BJ (cell line): ENCODE measurements at regions of chr1 and their contacts with region 1.

Region 1: GRCh38 chr1:202192770-202193613 is 607 bp upstream of the LGR6 start:
- DNase-seq: no peak
- H3K4me3 ChIP-seq: no peak overlapping the region
- H3K27me3 ChIP-seq: peaks cover 36% of the 10 kb centered on the region
- CTCF ChIP-seq: peak; percentile 91

Region 2: GRCh38 chr1:201990427-201990826 is 202.6 kb before region 1 on chr1:
- CTCF ChIA-PET with region 1: no interaction called
- POLR2A ChIA-PET with region 1: no interaction called
- DNase-seq: no peak
- H3K4me3 ChIP-seq: no peak overlapping the region
- H3K27me3 ChIP-seq: no peaks in the 10 kb centered on the region
- CTCF ChIP-seq: no peak

Region 3: GRCh38 chr1:202085682-202086404 is 107.1 kb before region 1 on chr1:
- CTCF ChIA-PET with region 1: no interaction called
- POLR2A ChIA-PET with region 1: no interaction called
- DNase-seq: no peak
- H3K4me3 ChIP-seq: no peak overlapping the region
- H3K27me3 ChIP-seq: peaks cover under 1% of the 10 kb centered on the region
- CTCF ChIP-seq: no peak

Region 4: GRCh38 chr1:202176949-202177927 is 15.8 kb before region 1 on chr1:
- CTCF ChIA-PET with region 1: interaction called, 23 read pairs
- POLR2A ChIA-PET with region 1: no interaction called
- DNase-seq: no peak
- H3K4me3 ChIP-seq: no peak overlapping the region
- H3K27me3 ChIP-seq: peaks cover 20% of the 10 kb centered on the region
- CTCF ChIP-seq: no peak

Region 5: GRCh38 chr1:202274611-202275010 is 81.6 kb after region 1 on chr1:
- CTCF ChIA-PET with region 1: interaction called, 19 read pairs
- POLR2A ChIA-PET with region 1: no interaction called
- DNase-seq: no peak
- H3K4me3 ChIP-seq: no peak overlapping the region
- H3K27me3 ChIP-seq: peaks cover 52% of the 10 kb centered on the region
- CTCF ChIP-seq: peak; percentile 51

Region 6: GRCh38 chr1:202291961-202292712 is 99.1 kb after region 1 on chr1:
- CTCF ChIA-PET with region 1: interaction called, 14 read pairs
- POLR2A ChIA-PET with region 1: no interaction called
- DNase-seq: no peak
- H3K4me3 ChIP-seq: no peak overlapping the region
- H3K27me3 ChIP-seq: peaks cover 36% of the 10 kb centered on the region
- CTCF ChIP-seq: no peak

Region 7: GRCh38 chr1:202315576-202316168 is 122.7 kb after region 1 on chr1:
- CTCF ChIA-PET with region 1: interaction called, 206 read pairs
- POLR2A ChIA-PET with region 1: no interaction called
- DNase-seq: no peak
- H3K4me3 ChIP-seq: no peak overlapping the region
- H3K27me3 ChIP-seq: peaks cover 27% of the 10 kb centered on the region
- CTCF ChIP-seq: peak; percentile 99

Region 8: GRCh38 chr1:202329891-202330290 is 136.9 kb after region 1 on chr1:
- CTCF ChIA-PET with region 1: interaction called, 32 read pairs
- POLR2A ChIA-PET with region 1: no interaction called
- DNase-seq: no peak
- H3K4me3 ChIP-seq: no peak overlapping the region
- H3K27me3 ChIP-seq: no peaks in the 10 kb centered on the region
- CTCF ChIP-seq: no peak

Region 9: GRCh38 chr1:202376247-202376646 is 183.3 kb after region 1 on chr1:
- CTCF ChIA-PET with region 1: no interaction called
- POLR2A ChIA-PET with region 1: no interaction called
- DNase-seq: no peak
- H3K4me3 ChIP-seq: no peak overlapping the region
- H3K27me3 ChIP-seq: no peaks in the 10 kb centered on the region
- CTCF ChIP-seq: no peak

Region 10: DNA sequence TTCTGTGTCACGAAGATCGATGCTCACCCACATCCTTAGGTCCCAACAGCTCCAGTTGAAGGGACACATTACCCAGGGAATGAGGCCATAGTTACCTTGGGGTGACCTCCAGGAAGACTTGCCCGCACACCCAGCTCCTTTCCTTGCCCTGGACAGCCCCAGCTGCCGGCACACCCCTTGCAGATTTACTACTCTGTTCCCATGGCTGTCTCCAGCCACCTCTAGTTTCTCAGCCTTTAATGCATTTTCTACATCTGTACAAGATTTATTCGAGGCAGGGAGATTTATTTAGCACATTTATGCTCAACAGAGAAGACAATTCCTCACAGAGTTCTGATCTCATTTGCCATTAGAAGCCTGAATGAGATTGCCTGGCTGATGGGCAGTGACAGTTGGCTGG is 480.5 kb after region 1 on chr1:
- CTCF ChIA-PET with region 1: no interaction called
- POLR2A ChIA-PET with region 1: no interaction called
- DNase-seq: no peak
- H3K4me3 ChIP-seq: no peak overlapping the region
- H3K27me3 ChIP-seq: peaks cover 9% of the 10 kb centered on the region
- CTCF ChIP-seq: no peak